Body of pancreas (tissue), 4 donors: ENCODE measurements at regions of chr3 and their contacts with region 1.

Region 1: DNA sequence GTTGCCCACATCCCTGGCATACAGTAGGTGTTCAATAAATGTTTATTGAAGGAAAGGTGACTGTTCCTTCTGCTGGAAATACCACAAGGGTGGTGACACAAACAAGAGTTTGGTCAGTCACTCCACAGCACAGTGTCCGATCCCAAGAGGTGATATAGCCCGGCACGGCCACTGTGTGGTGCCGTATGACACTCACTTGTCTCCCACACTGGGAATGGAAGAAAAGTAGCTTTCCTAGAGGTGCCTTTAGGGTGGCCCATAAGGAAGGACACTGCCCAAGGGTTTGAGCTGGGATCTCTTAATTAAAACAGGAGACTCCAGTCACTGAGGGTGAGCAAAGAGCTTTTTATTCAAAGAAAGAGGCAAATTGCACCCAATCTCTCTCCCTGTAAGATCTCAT is 40.5 kb downstream of the TGM4 start:
- DNase-seq: no peak
- ATAC-seq: no peak
- H3K4me3 ChIP-seq: no peak overlapping the region
- H3K27ac ChIP-seq: no peak overlapping the region
- H3K4me1 ChIP-seq: no peaks in the 10 kb centered on the region
- H3K27me3 ChIP-seq: no peaks in the 10 kb centered on the region
- CTCF ChIP-seq: peak in 1 of 7 experiments; percentile 6
- POLR2A ChIP-seq: no peak

Region 2: GRCh38 chr3:44529927-44530326 is 385.0 kb before region 1 on chr3:
- intact Hi-C with region 1: loop called (anchors 5 kb)
- DNase-seq: no peak
- ATAC-seq: no peak
- H3K4me3 ChIP-seq: no peak overlapping the region
- H3K27ac ChIP-seq: no peak overlapping the region
- H3K4me1 ChIP-seq: no peaks in the 10 kb centered on the region
- H3K27me3 ChIP-seq: no peaks in the 10 kb centered on the region
- CTCF ChIP-seq: peak in 1 of 7 experiments; percentile 5
- POLR2A ChIP-seq: no peak